ENCODE measurements at regions of chr3 and their contacts with region 1.

Region 1: GRCh38 chr3:146577662-146578061 is 27.5 kb downstream of the PLSCR5 start:
- DNase-seq: peak in 5 of 9 experiments; percentile 18 to 69 (median 29)
- ATAC-seq: peak; percentile 49
- H3K4me3 ChIP-seq: no peak overlapping the region
- H3K4me3 Mint-ChIP-seq: no peak overlapping the region
- H3K27ac ChIP-seq: no peak overlapping the region
- H3K27ac Mint-ChIP-seq: no peak overlapping the region
- H3K4me1 ChIP-seq: no peaks in the 10 kb centered on the region
- H3K4me1 Mint-ChIP-seq: no peaks in the 10 kb centered on the region
- H3K27me3 ChIP-seq: no peaks in the 10 kb centered on the region
- H3K27me3 Mint-ChIP-seq: peaks cover 8% of the 10 kb centered on the region
- CTCF ChIP-seq: peak; percentile 79

Region 2: DNA sequence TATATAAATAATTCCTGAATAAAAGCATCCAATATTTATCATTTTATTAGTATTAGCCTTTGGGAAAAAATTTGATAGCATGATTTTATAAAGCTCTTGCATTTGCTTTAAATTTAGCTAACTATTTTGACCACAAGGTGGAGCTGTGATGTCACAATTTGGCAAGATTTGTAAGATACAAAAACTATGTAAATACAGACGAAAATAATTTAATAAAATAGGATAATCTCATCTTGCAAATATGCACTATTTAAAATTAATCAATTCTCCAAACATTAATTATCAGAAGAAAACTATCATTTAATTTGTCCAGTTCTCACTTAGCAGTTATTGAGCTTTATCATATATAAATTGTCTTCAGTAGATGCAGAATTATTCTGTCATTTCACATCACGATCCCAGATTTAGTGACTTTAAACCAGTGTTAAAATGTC is 512.1 kb before region 1 on chr3:
- CTCF ChIA-PET with region 1: interaction called, 4 read pairs
- POLR2A ChIA-PET with region 1: no interaction called
- intact Hi-C with region 1: loop called (anchors 2 to 5 kb)
- DNase-seq: peak in 1 of 9 experiments; percentile 18
- ATAC-seq: no peak
- H3K4me3 ChIP-seq: no peak overlapping the region
- H3K4me3 Mint-ChIP-seq: no peak overlapping the region
- H3K27ac ChIP-seq: no peak overlapping the region
- H3K27ac Mint-ChIP-seq: no peak overlapping the region
- H3K4me1 ChIP-seq: no peaks in the 10 kb centered on the region
- H3K4me1 Mint-ChIP-seq: no peaks in the 10 kb centered on the region
- H3K27me3 ChIP-seq: no peaks in the 10 kb centered on the region
- H3K27me3 Mint-ChIP-seq: no peaks in the 10 kb centered on the region
- CTCF ChIP-seq: peak; percentile 58

Region 3: DNA sequence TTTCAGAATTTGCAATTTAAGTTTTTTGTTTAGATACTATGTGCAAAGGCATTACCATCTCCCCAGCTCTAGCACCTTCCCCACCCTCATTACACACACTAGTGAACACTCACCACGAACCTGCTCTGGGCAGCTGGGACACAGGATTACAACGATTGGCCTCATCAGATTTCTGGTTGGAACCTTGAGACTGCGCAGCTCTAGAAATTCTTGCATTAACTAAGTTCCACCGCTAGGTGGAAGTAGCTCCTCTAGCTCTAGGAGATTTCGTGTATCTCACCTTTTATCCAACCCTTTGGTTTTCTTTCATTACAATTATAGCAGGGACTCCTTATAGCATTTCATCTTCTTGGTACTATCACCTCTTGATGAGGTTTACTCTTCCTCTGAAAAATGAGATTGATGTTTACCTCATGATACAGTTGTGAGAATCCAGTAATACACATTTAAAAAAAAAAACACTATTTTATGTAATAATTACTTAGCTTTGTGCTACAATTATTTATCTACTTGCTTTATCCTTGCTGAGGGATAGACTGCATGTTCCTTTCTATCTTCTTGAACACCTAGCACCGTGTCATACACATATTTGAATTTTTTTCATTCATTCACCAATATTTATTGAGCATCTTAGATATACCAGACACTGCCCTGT is 388.0 kb before region 1 on chr3:
- CTCF ChIA-PET with region 1: interaction called, 19 read pairs
- POLR2A ChIA-PET with region 1: no interaction called
- intact Hi-C with region 1: loop called in 1 of 2 experiments (anchors 1 kb)
- DNase-seq: peak in 3 of 9 experiments; percentile 5 to 43 (median 33)
- ATAC-seq: peak; percentile 59
- H3K4me3 ChIP-seq: no peak overlapping the region
- H3K4me3 Mint-ChIP-seq: no peak overlapping the region
- H3K27ac ChIP-seq: no peak overlapping the region
- H3K27ac Mint-ChIP-seq: no peak overlapping the region
- H3K4me1 ChIP-seq: no peaks in the 10 kb centered on the region
- H3K4me1 Mint-ChIP-seq: no peaks in the 10 kb centered on the region
- H3K27me3 ChIP-seq: no peaks in the 10 kb centered on the region
- H3K27me3 Mint-ChIP-seq: peaks cover 6% of the 10 kb centered on the region
- CTCF ChIP-seq: peak; percentile 71

Region 4: DNA sequence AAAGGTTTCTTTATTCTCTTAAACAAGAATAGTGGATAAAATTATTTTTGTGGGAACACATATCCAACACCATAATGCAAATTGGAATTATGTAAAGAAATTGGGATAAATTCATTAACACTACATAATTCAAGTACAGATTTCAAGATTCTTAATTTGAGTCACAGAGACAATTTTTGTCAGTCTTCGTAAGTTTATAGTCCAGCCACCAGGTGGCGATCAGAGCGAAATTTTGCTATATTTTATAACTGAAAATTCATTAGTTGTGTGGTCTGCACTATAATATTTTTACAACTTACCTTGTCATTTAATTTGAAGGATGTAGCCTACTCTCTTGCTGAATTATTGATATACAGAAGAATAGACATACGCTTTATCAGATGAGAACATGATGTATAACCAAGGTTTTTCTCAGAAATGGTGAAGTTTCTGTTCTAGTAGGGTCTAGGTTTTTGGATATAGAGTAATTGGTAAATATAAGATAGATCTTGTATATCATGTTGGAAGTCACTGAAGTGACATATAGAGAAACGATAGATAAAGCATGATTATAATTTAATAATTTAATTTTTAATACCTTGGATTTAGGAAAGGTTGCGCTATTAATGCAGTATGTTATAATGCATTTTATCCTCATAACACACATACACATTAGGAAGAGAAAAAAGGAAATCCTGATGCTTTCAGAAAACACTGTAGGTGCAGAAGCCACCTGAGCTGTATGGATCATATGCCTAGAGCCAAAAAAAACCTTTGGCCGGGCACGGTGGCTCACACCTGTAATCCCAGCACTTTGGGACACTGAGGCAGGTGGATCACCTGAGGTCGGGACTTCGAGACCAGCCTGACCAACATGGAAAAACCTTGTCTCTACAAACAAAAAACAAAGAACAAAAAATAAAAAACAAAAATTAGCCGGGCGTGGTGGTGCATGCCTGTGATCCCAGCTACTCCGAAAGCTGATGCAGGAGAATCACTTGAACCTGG is 358.5 kb before region 1 on chr3:
- CTCF ChIA-PET with region 1: interaction called, 8 read pairs
- POLR2A ChIA-PET with region 1: no interaction called
- intact Hi-C with region 1: loop called in 1 of 2 experiments (anchors 1 kb)
- DNase-seq: peak in 8 of 9 experiments; percentile 1 to 52 (median 44)
- ATAC-seq: no peak
- H3K4me3 ChIP-seq: no peak overlapping the region
- H3K4me3 Mint-ChIP-seq: no peak overlapping the region
- H3K27ac ChIP-seq: no peak overlapping the region
- H3K27ac Mint-ChIP-seq: no peak overlapping the region
- H3K4me1 ChIP-seq: no peaks in the 10 kb centered on the region
- H3K4me1 Mint-ChIP-seq: no peaks in the 10 kb centered on the region
- H3K27me3 ChIP-seq: no peaks in the 10 kb centered on the region
- H3K27me3 Mint-ChIP-seq: peaks cover 5% of the 10 kb centered on the region
- CTCF ChIP-seq: peak; percentile 85

Region 5: DNA sequence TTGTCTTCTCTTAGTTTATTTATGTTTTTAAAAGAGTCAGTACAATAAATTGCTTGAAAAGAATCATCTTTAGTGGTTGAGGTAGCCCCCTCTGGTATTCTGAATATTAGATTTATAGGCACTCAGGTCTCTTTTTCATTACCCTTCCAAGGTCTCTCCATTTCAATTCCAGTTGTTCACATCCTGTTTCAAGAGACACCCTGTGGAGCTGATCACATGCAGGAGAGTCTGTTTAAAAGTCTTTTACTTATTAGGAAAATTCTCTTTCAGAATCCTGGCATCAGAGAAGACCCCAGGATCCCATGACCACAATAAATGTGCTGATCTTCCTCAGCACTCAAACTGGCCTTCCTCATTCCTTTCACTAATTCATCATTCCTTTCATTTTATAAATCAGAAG is 633.0 kb after region 1 on chr3:
- CTCF ChIA-PET with region 1: no interaction called
- POLR2A ChIA-PET with region 1: no interaction called
- intact Hi-C with region 1: no loop called
- DNase-seq: no peak
- ATAC-seq: no peak
- H3K4me3 ChIP-seq: no peak overlapping the region
- H3K4me3 Mint-ChIP-seq: no peak overlapping the region
- H3K27ac ChIP-seq: no peak overlapping the region
- H3K27ac Mint-ChIP-seq: no peak overlapping the region
- H3K4me1 ChIP-seq: no peaks in the 10 kb centered on the region
- H3K4me1 Mint-ChIP-seq: no peaks in the 10 kb centered on the region
- H3K27me3 ChIP-seq: no peaks in the 10 kb centered on the region
- H3K27me3 Mint-ChIP-seq: no peaks in the 10 kb centered on the region
- CTCF ChIP-seq: no peak